Panc1 (cell line): ENCODE measurements at regions of chr16 and their contacts with region 1.

Region 1: GRCh38 chr16:30112197-30113030 is 923 bp downstream of the GDPD3 start:
- DNase-seq: no peak
- ATAC-seq: peak; percentile 88
- H3K4me3 ChIP-seq: no peak overlapping the region
- H3K27ac ChIP-seq: no peak overlapping the region
- H3K4me1 ChIP-seq: no peaks in the 10 kb centered on the region
- H3K27me3 ChIP-seq: no peaks in the 10 kb centered on the region
- CTCF ChIP-seq: peak; percentile 96

Region 2: GRCh38 chr16:29915590-29916247 is 196.7 kb before region 1 on chr16:
- CTCF ChIA-PET with region 1: no interaction called
- POLR2A ChIA-PET with region 1: no interaction called
- in situ Hi-C with region 1: no loop called
- intact Hi-C with region 1: no loop called
- DNase-seq: no peak
- ATAC-seq: no peak
- H3K4me3 ChIP-seq: no peak overlapping the region
- H3K27ac ChIP-seq: no peak overlapping the region
- H3K4me1 ChIP-seq: no peaks in the 10 kb centered on the region
- H3K27me3 ChIP-seq: no peaks in the 10 kb centered on the region
- CTCF ChIP-seq: no peak

Region 3: DNA sequence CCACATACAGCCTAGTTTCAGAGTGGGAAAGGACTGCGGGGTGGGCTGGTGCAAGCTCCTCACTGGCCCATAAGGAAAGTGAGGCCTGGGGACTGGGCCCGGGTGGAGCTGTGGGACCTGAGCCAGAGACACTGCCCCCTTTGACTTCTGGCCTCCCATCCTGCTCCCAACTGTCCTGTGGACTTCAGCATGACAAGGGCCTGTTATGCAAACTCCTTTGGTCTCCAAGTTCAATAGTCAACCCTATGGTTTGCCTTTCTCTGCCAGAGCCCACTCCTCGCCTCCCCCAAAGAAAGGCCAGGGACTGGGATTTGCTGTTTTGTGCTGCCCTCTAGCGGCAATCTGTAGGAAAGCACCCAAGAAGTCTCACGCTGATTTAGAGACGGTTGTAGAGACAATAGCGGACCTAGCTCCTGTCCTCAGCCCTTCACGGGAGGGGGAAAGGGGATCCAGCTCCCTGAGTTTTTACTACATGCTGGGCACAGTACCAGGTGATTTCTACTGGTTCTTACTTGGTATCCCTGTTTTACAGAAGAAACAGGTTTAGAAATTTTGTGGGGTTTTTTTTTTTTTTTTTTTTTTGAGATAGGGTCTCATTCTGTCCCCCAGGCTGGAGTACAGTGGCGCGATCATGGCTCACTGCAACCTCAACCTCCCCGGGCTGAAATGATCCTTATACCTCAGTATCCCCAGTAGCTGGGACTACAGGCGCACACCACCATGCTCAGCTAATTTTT is 80.2 kb before region 1 on chr16:
- CTCF ChIA-PET with region 1: no interaction called
- POLR2A ChIA-PET with region 1: no interaction called
- in situ Hi-C with region 1: no loop called
- intact Hi-C with region 1: no loop called
- DNase-seq: no peak
- ATAC-seq: peak; percentile 72
- H3K4me3 ChIP-seq: no peak overlapping the region
- H3K27ac ChIP-seq: no peak overlapping the region
- H3K4me1 ChIP-seq: peaks cover 9% of the 10 kb centered on the region
- H3K27me3 ChIP-seq: no peaks in the 10 kb centered on the region
- CTCF ChIP-seq: peak; percentile 91

Region 4: DNA sequence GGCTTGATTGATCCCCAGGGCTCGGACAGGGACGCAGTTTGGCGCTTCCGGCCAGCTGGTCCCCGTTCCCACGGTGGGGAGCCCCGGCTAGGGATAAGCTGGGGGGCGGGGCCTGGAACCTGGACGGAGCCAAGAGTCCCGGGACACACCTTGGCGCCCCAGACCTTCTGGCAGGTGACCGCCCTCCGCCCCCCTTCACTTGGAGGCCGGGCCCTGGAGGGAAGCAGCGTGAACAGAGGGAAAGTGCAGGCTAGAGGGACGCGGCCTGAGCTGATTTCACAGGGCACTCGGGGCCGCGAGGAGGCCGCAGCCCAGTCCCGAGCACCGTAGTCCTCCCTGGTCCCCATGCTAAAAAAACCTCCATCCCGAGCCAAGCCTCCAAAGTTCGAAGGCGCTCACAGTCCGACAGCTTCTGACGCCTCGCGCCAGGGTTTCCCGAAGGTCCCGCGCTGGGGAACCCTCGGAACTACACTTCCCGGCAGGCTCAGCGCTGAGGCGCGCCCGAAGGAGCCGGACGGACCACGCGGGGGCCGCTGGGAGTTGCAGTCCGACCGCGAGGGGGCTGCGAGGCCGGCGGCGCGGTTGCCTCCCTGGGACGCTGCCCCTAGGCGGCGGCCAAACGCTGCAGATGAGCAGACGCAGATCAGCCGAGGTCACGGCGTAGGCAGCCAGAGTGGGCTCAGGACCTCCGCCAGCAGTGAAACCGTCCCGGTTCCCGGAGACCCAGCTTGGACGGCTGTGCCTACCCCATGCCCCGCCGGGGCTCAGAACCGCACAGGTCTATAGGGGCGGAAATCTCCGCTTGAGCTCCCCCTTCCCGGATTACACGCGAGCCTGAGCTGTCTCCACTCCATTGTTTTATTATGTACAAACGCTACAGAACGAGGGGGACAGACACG is 20.7 kb before region 1 on chr16 and contains the start of gene TBX6:
- CTCF ChIA-PET with region 1: interaction called, 11 read pairs
- POLR2A ChIA-PET with region 1: no interaction called
- in situ Hi-C with region 1: no loop called
- intact Hi-C with region 1: no loop called
- DNase-seq: no peak
- ATAC-seq: peak; percentile 95
- H3K4me3 ChIP-seq: peak within 1 kb of the TSS; percentile 48 to 74
- H3K27ac ChIP-seq: peak within 1 kb of the TSS; percentile 69
- H3K4me1 ChIP-seq: peaks cover 23% of the 10 kb centered on the region
- H3K27me3 ChIP-seq: no peaks in the 10 kb centered on the region
- CTCF ChIP-seq: peak; percentile 86
- total RNA-seq, gene TBX6: 0.46 TPM